Naive thymus-derived CD4-positive, alpha-beta T cell (primary cell): ENCODE measurements at regions of chr7 and their contacts with region 1.

Region 1: DNA sequence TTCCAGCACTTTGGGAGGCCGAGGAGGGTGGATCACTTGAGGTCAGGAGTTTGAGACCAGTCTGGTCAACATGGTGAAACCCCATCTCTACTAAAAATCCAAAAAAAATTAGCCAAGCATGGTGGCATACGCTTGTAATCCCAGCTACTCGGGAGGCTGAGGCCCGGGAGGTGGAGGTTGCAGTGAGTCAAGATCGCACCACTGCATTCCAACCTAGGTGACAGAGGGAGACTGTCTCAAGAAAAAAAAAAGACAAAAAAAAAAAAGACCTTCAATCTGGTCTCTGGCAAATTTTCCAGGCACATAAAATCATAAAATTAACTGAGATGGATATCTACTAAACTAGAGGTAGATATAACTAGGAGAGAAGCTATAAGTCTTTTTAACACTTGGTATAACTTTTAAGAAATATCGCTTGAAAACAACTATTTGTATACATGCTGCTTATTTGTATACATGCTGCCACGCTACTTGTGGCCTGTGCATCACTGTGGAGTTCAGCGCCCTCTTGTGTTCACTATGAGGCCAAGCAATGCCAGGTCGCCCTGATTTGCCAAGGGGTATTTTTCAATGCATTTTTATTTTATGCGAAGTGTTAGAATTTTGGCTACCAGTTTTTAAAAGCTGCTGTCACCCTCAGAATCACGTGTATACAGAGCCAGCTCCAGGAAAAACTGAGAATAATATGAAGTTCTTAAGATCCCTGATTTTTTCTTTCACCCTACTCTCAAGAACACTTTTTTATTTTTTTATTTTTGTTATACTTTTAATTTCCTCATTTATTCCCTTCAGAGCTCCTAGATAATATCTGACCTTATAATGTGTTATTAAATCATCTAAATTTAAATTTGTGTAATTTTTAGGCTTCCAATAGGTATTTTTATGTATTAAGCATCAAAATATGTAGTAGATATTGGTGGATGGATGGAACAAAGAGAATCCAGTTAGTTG is 26.7 kb downstream of the CYCS start:
- DNase-seq: peak in 8 of 9 donors; percentile 26 to 53 (median 44)
- ATAC-seq: peak; percentile 93
- H3K4me3 ChIP-seq: no peak overlapping the region
- H3K4me3 Mint-ChIP-seq: no peak overlapping the region
- H3K27ac ChIP-seq: no peak overlapping the region
- H3K27ac Mint-ChIP-seq: no peak overlapping the region
- H3K4me1 ChIP-seq: no peaks in the 10 kb centered on the region
- H3K4me1 Mint-ChIP-seq: peaks cover 0 to 14% (median 6%) of the 10 kb centered on the region in 7 donors
- H3K27me3 ChIP-seq: no peaks in the 10 kb centered on the region
- H3K27me3 Mint-ChIP-seq: peaks cover 0 to 18% (median 0%) of the 10 kb centered on the region in 5 donors

Region 2: DNA sequence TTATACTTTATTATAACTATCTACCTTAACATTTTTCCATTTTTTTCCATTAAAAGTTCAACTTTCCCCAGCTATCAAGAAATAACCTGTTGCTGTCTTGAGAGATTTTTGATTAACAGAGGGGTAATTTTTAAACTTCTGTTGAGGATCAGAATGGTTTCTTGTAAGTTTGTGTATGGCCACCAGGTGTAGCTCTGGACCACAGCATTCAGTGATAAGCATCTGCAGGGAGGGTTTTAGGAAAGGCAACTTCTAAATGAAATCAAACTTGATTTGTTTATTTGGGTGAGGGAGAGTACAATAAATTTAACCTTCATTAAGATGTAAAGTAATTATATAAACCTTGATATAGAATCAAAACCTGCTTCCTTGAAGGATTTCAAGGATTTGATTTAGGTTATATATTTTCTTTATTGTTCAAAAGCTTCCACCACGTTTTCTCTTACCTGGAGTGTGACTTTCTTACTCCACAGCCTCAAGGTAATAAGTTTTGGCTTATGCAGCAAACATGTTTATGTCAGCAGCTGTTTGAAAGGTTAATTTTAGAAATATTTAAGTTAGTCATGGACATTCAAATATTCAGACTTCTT is 1235.1 kb before region 1 on chr7:
- CTCF ChIA-PET with region 1: interaction called, 4 read pairs
- POLR2A ChIA-PET with region 1: no interaction called
- intact Hi-C with region 1: loop called in 1 of 2 experiments (anchors 5 kb)
- DNase-seq: peak in 3 of 9 donors; percentile 7 to 20 (median 12)
- ATAC-seq: no peak
- H3K4me3 ChIP-seq: no peak overlapping the region
- H3K4me3 Mint-ChIP-seq: no peak overlapping the region
- H3K27ac ChIP-seq: no peak overlapping the region
- H3K27ac Mint-ChIP-seq: no peak overlapping the region
- H3K4me1 ChIP-seq: no peaks in the 10 kb centered on the region
- H3K4me1 Mint-ChIP-seq: no peaks in the 10 kb centered on the region
- H3K27me3 ChIP-seq: no peaks in the 10 kb centered on the region
- H3K27me3 Mint-ChIP-seq: peaks cover 3 to 19% (median 6%) of the 10 kb centered on the region in 5 donors

Region 3: DNA sequence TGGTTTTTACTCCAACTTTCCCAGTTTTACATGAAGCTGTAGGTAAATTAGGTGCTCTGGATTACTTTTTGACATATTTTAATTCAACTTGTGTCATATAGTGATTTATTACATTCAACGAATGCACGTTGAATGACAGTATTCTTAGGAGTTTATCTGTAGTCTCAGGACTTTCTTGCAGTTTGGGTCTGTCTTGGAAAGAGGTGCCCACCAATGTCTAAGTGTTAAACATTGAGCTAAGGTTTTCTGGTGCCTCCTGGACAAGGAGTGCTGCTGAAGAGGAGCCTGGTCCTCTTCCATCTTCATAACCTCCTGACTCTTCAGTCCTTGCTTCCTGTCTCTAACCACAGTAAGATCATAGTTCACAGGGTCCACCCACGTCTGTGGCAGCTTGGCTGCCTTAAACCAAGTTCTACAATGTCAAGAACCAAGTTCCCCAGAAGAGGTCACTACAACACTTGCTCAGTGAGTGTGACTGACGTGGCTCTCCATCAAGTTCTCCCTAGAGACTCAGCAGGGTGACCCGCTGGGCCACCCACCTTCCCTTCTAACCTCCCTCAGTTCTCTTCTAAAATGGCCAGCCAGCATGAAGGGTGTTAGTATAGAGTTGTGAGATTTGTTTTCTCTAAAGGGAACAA is 808.2 kb before region 1 on chr7:
- CTCF ChIA-PET with region 1: no interaction called
- POLR2A ChIA-PET with region 1: no interaction called
- intact Hi-C with region 1: loop called (anchors 1 to 2 kb)
- DNase-seq: peak in 8 of 9 donors; percentile 17 to 51 (median 40)
- ATAC-seq: peak; percentile 83
- H3K4me3 ChIP-seq: no peak overlapping the region
- H3K4me3 Mint-ChIP-seq: no peak overlapping the region
- H3K27ac ChIP-seq: no peak overlapping the region
- H3K27ac Mint-ChIP-seq: no peak overlapping the region
- H3K4me1 ChIP-seq: peaks cover 0 to 5% of the 10 kb centered on the region in 2 donors
- H3K4me1 Mint-ChIP-seq: peaks cover 6 to 19% (median 12%) of the 10 kb centered on the region in 7 donors
- H3K27me3 ChIP-seq: peaks cover 0 to 16% of the 10 kb centered on the region in 2 donors
- H3K27me3 Mint-ChIP-seq: peaks cover 48 to 56% (median 50%) of the 10 kb centered on the region in 5 donors

Region 4: GRCh38 chr7:24812310-24812945 is 285.9 kb before region 1 on chr7:
- CTCF ChIA-PET with region 1: interaction called, 50 read pairs
- POLR2A ChIA-PET with region 1: no interaction called
- intact Hi-C with region 1: loop called (anchors 1 kb)
- DNase-seq: peak in 8 of 9 donors; percentile 6 to 52 (median 32)
- ATAC-seq: peak; percentile 90
- H3K4me3 ChIP-seq: no peak overlapping the region
- H3K4me3 Mint-ChIP-seq: no peak overlapping the region
- H3K27ac ChIP-seq: no peak overlapping the region
- H3K27ac Mint-ChIP-seq: no peak overlapping the region
- H3K4me1 ChIP-seq: no peaks in the 10 kb centered on the region
- H3K4me1 Mint-ChIP-seq: peaks cover 0 to 6% (median 0%) of the 10 kb centered on the region in 7 donors
- H3K27me3 ChIP-seq: no peaks in the 10 kb centered on the region
- H3K27me3 Mint-ChIP-seq: no peaks in the 10 kb centered on the region

Region 5: GRCh38 chr7:24948739-24949138 is 149.6 kb before region 1 on chr7:
- CTCF ChIA-PET with region 1: no interaction called
- POLR2A ChIA-PET with region 1: no interaction called
- intact Hi-C with region 1: no loop called
- DNase-seq: no peak
- ATAC-seq: no peak
- H3K4me3 ChIP-seq: no peak overlapping the region
- H3K4me3 Mint-ChIP-seq: no peak overlapping the region
- H3K27ac ChIP-seq: no peak overlapping the region
- H3K27ac Mint-ChIP-seq: no peak overlapping the region
- H3K4me1 ChIP-seq: peaks cover 0 to 12% of the 10 kb centered on the region in 2 donors
- H3K4me1 Mint-ChIP-seq: peaks cover 20 to 58% (median 34%) of the 10 kb centered on the region in 7 donors
- H3K27me3 ChIP-seq: no peaks in the 10 kb centered on the region
- H3K27me3 Mint-ChIP-seq: no peaks in the 10 kb centered on the region

Region 6: DNA sequence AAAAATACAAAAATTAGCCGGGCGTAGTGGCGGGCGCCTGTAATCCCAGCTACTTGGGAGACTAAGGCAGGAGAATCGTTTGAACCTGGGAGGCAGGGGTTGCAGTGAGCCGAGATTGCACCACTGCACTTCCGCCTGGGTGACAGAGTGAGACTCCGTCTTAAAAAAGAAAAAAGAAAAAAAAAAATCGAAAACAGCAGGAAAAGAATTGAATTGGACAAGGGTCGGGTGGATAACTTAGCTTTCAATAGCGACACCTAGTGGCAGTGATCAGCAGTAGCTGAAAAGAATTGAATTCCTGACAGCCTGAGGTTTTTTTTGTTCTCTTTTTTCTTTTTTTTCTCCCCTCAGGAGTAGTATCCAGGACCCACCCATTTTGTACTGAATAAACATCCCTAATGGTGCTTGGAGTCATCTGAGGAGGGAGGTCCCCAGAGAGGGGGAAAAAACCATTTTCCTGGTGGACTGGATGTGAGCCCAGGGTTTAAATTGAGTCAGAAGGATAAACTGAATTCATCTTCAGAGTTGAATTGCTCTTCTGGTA is 28.4 kb before region 1 on chr7:
- CTCF ChIA-PET with region 1: interaction called, 12 read pairs
- POLR2A ChIA-PET with region 1: no interaction called
- intact Hi-C with region 1: loop called (anchors 1 to 2 kb)
- DNase-seq: peak in 8 of 9 donors; percentile 27 to 63 (median 54)
- ATAC-seq: peak; percentile 74
- H3K4me3 ChIP-seq: no peak overlapping the region
- H3K4me3 Mint-ChIP-seq: no peak overlapping the region
- H3K27ac ChIP-seq: no peak overlapping the region
- H3K27ac Mint-ChIP-seq: no peak overlapping the region
- H3K4me1 ChIP-seq: no peaks in the 10 kb centered on the region
- H3K4me1 Mint-ChIP-seq: peaks cover 0 to 17% (median 0%) of the 10 kb centered on the region in 7 donors
- H3K27me3 ChIP-seq: no peaks in the 10 kb centered on the region
- H3K27me3 Mint-ChIP-seq: no peaks in the 10 kb centered on the region

Region 7: GRCh38 chr7:25158966-25159365 is 60.6 kb after region 1 on chr7:
- CTCF ChIA-PET with region 1: no interaction called
- POLR2A ChIA-PET with region 1: no interaction called
- intact Hi-C with region 1: loop called in 1 of 2 experiments (anchors 1 kb)
- DNase-seq: no peak
- ATAC-seq: no peak
- H3K4me3 ChIP-seq: no peak overlapping the region
- H3K4me3 Mint-ChIP-seq: no peak overlapping the region
- H3K27ac ChIP-seq: no peak overlapping the region
- H3K27ac Mint-ChIP-seq: no peak overlapping the region
- H3K4me1 ChIP-seq: no peaks in the 10 kb centered on the region
- H3K4me1 Mint-ChIP-seq: peaks cover 0 to 5% (median 4%) of the 10 kb centered on the region in 7 donors
- H3K27me3 ChIP-seq: no peaks in the 10 kb centered on the region
- H3K27me3 Mint-ChIP-seq: no peaks in the 10 kb centered on the region